Aorta (tissue), 5 donors: ENCODE measurements at regions of chr9 and their contacts with region 1.

Region 1: DNA sequence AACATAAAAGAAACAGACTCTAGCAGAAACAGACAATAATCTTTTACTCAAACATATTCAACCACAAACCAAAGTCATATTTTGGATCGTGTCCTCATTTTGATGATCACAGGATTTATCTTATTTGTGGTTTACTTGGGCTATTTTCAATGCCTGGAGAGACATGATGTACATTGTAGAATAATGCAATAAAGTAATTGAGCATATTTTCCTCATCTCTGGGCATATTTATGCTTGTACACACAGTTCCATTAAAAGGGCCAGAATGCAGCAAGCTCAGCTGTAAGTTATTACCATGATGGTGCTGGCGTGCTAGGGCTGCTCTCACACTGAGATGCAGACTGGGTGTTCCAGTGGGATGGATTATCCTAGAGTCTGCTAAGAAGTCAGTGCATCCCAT is 456.7 kb downstream of the TLE4 start:
- DNase-seq: no peak
- ATAC-seq: no peak
- H3K4me3 ChIP-seq: no peak overlapping the region
- H3K27ac ChIP-seq: no peak overlapping the region
- H3K4me1 ChIP-seq: no peaks in the 10 kb centered on the region
- H3K27me3 ChIP-seq: no peaks in the 10 kb centered on the region

Region 2: GRCh38 chr9:79962836-79963235 is 65.7 kb before region 1 on chr9:
- intact Hi-C with region 1: loop called in 1 of 2 experiments (anchors 10 kb)
- DNase-seq: no peak
- ATAC-seq: no peak
- H3K4me3 ChIP-seq: no peak overlapping the region
- H3K27ac ChIP-seq: no peak overlapping the region
- H3K4me1 ChIP-seq: no peaks in the 10 kb centered on the region
- H3K27me3 ChIP-seq: peaks cover 0 to 1% of the 10 kb centered on the region in 2 donors